ENCODE measurements at regions of chr9 and their contacts with region 1.

Region 1: DNA sequence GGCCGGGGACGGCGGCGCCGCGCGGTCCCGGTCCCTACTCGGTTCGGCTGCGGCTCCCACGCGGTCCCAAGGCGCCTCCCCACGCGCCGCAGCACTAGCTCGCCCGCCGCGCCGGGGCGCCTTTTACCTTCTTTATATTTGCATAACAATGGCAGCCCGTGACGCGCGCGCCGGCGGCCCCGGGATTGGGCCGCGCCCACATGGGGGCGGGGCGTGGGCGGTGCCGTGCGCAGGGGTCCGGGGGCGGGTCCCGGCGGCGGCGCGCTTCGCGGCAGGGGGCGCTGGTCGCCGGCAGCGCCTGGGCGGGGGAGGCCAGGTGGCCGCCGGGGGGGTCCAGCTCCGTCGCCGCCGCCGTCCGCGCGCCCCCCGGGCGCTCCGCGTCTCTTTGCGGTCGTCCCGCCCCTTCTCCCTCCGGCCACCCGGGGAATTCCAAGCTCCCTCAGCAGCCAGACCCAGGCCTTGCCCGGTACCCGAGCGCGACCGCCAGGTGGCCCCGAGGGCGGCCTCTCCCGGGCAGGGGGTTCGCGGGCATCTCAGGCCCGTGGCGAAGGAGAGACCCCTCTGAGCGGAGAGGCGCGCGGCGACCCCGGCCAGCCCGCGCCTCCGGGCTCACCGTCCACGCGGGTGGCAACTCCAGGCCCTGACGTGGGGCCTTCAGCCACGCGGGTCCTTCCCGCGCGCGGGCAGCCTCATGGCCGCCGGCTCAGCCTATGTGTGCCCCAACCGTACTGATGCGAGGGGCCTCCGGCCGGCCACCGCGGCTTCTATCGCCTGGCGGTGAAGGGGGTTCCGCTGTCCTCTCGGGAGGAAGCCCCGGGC is at the start of gene NRARP:
- DNase-seq: peak; percentile 84 to 96 (median 93)

Region 2: DNA sequence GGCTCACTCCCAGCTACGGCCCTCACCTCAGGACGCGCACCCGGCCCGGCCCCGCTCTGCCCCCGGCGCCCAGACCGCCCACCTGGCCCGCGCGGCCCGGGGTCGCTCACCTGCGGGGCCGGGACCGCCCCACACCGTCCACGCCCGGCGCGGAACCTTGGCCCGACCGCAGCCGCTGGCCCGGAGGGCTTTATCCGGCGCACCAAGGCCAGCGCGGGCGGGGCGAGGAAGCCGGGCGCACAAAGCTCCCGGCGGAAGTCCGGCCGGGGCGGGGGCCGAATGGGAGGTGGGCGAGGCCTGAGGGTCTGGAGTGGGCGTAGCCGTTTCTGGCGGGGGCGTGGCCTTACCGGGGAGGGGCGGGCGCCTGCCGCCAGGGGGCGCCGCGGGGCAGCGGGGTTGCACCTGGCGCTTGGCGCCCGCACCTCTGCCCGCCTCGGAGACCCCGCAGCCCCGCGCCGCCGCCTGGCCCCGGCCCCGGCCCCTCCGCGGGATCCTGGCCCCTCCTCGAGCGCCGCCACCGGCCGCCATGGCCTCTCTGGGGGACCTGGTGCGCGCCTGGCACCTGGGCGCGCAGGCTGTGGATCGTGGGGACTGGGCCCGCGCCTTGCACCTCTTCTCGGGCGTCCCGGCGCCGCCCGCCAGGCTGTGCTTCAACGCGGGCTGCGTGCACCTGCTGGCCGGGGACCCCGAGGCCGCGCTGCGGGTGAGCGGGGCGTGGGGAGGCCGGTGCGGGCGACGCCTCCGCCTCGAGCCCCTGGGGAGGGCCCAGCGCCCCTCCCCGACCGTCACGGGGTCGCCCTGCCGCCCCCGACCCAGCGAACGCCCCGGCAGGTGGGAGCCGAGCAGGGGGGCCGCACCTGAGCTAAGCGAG is 120.9 kb after region 1 on chr9 and contains the starts of genes EXD3 and NOXA1:
- intact Hi-C with region 1: loop called (anchors 10 kb)
- DNase-seq: peak; percentile 66 to 95 (median 89)